Activated CD8-positive, alpha-beta T cell treated with anti-CD3 and anti-CD28 coated beads for 36 hours (primary cell): ENCODE measurements at regions of chr1 and their contacts with region 1.

Region 1: GRCh38 chr1:78126506-78126905 is 80.7 kb downstream of the GIPC2 start:
- DNase-seq: no peak
- ATAC-seq: no peak
- H3K4me3 Mint-ChIP-seq: no peak overlapping the region
- H3K27ac Mint-ChIP-seq: no peak overlapping the region
- H3K4me1 Mint-ChIP-seq: no peaks in the 10 kb centered on the region
- H3K27me3 Mint-ChIP-seq: no peaks in the 10 kb centered on the region
- CTCF ChIP-seq: no peak

Region 2: GRCh38 chr1:78145105-78145580 is 18.6 kb after region 1 on chr1:
- CTCF ChIA-PET with region 1: interaction called, 75 read pairs
- POLR2A ChIA-PET with region 1: interaction called, 3 read pairs
- intact Hi-C with region 1: no loop called
- DNase-seq: peak; percentile 62
- ATAC-seq: peak; percentile 81
- H3K4me3 Mint-ChIP-seq: no peak overlapping the region
- H3K27ac Mint-ChIP-seq: no peak overlapping the region
- H3K4me1 Mint-ChIP-seq: peaks cover 17% of the 10 kb centered on the region
- H3K27me3 Mint-ChIP-seq: peaks cover 4% of the 10 kb centered on the region
- CTCF ChIP-seq: peak; percentile 87